CD4-positive, alpha-beta T cell (primary cell): ENCODE measurements at regions of chr1 and their contacts with region 1.

Region 1: GRCh38 chr1:44168520-44169098 is 27.2 kb upstream of the KLF18 start:
- DNase-seq: no peak
- ATAC-seq: no peak
- H3K4me3 ChIP-seq: no peak overlapping the region
- H3K4me3 Mint-ChIP-seq: no peak overlapping the region
- H3K27ac ChIP-seq: no peak overlapping the region
- H3K27ac Mint-ChIP-seq: no peak overlapping the region
- H3K4me1 ChIP-seq: no peaks in the 10 kb centered on the region
- H3K4me1 Mint-ChIP-seq: no peaks in the 10 kb centered on the region
- H3K27me3 ChIP-seq: peaks cover under 1 to 3% of the 10 kb centered on the region in 2 experiments
- H3K27me3 Mint-ChIP-seq: peaks cover 16% of the 10 kb centered on the region
- CTCF ChIP-seq: no peak

Region 2: GRCh38 chr1:44059956-44060355 is 108.7 kb before region 1 on chr1:
- CTCF ChIA-PET with region 1: no interaction called
- POLR2A ChIA-PET with region 1: no interaction called
- intact Hi-C with region 1: no loop called
- DNase-seq: no peak
- ATAC-seq: no peak
- H3K4me3 ChIP-seq: no peak overlapping the region
- H3K4me3 Mint-ChIP-seq: no peak overlapping the region
- H3K27ac ChIP-seq: no peak overlapping the region
- H3K27ac Mint-ChIP-seq: no peak overlapping the region
- H3K4me1 ChIP-seq: no peaks in the 10 kb centered on the region
- H3K4me1 Mint-ChIP-seq: no peaks in the 10 kb centered on the region
- H3K27me3 ChIP-seq: no peaks in the 10 kb centered on the region
- H3K27me3 Mint-ChIP-seq: peaks cover 5% of the 10 kb centered on the region
- CTCF ChIP-seq: no peak

Region 3: DNA sequence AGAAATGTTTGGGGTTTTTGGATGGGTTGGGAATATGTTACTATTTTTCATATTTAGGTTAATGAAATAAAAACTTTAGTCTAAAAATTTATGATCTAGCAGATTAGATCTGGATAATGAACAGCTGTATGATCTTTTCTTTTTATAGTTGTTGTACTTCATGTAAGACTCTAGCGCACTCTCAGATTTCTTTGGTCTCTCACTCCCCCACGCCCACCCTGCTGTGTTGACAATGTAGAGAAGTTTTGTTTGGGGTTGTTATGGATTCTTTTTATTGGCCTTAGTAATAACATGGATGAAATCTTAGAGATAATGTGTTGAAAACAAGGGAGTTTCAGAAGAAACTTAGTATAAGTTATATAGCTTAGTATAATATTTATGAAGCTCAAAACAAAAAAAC is 32.7 kb before region 1 on chr1:
- CTCF ChIA-PET with region 1: no interaction called
- POLR2A ChIA-PET with region 1: no interaction called
- intact Hi-C with region 1: no loop called
- DNase-seq: no peak
- ATAC-seq: no peak
- H3K4me3 ChIP-seq: no peak overlapping the region
- H3K4me3 Mint-ChIP-seq: no peak overlapping the region
- H3K27ac ChIP-seq: no peak overlapping the region
- H3K27ac Mint-ChIP-seq: no peak overlapping the region
- H3K4me1 ChIP-seq: no peaks in the 10 kb centered on the region
- H3K4me1 Mint-ChIP-seq: no peaks in the 10 kb centered on the region
- H3K27me3 ChIP-seq: peaks cover 3 to 5% of the 10 kb centered on the region in 2 experiments
- H3K27me3 Mint-ChIP-seq: peaks cover 14% of the 10 kb centered on the region
- CTCF ChIP-seq: no peak

Region 4: DNA sequence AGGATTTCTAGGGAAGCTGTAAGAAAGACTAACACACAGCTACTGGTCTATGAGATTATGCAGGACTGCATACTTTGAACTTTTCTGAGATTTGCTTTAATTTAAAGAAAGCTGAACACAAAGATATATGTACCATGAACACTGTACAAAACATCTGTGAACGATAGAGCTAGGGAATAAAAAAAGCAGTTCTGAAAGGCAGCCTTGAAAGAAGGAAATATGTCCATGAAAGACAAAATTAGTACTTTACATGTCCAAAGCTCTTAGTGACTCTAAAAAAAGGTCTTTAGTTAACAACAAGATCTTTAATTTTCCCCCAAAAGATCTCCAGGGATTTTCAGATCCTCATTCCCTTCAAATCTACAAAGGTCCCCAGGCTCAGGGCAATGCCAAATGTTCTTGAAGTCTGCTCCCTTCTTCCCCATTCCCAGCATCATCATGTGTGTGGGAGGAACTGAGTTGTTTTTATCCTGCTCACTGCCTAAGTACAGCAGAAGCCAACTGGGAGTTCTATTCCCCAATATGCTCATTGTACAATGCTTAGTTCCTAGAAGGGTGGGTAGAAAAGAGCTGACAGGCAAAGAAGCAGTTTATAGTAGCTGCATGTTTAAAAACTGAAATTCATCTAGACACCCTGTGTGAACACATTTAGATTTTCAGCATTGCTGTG is 734.5 kb after region 1 on chr1:
- CTCF ChIA-PET with region 1: no interaction called
- POLR2A ChIA-PET with region 1: no interaction called
- intact Hi-C with region 1: loop called in 1 of 2 experiments (anchors 5 kb)
- DNase-seq: no peak
- ATAC-seq: no peak
- H3K4me3 ChIP-seq: no peak overlapping the region
- H3K4me3 Mint-ChIP-seq: no peak overlapping the region
- H3K27ac ChIP-seq: no peak overlapping the region
- H3K27ac Mint-ChIP-seq: no peak overlapping the region
- H3K4me1 ChIP-seq: no peaks in the 10 kb centered on the region
- H3K4me1 Mint-ChIP-seq: no peaks in the 10 kb centered on the region
- H3K27me3 ChIP-seq: no peaks in the 10 kb centered on the region
- H3K27me3 Mint-ChIP-seq: no peaks in the 10 kb centered on the region
- CTCF ChIP-seq: no peak